HepG2 (cell line): ENCODE measurements at regions of chr6 and their contacts with region 1.

Region 1: DNA sequence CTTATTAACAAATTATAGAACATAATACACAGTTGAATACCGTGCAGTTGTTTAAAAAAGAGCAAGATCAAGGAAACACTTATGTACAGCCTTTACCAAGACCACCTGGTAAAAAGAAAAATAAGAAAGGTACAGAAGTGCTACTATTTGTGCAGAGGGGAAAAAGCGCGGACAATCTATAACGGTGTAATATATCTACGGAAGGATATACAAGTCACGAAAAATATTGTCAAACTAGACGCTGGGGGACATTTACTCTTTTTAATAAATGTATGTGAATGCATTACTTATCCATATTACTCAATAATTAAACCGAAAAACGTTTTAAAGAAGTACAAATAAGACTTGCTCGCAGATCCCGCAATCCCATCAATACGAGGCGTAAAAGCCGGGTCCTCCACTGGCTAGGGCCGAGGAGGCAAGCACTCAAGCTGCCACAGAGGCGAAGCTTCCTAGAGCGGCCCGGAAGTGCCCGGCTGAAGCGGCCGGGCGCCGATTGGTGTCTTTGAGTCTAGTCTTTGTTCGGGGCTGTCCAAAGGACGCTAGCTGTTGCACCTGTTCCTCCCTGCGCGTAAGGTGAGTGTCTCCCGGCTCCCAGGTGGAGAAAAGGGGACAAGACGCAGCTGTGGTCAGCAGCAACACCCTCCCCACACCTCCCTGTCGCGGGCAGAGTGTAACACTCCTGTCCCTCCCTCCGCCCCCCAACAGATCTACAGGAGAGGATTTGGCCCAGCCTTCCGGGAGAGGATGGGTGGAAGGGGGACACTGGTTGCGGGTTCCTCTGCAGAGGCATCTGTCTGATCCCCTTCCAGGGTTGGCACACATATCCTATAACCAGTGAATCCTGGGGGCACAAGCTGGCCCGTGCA is at the start of gene ZSCAN16:
- DNase-seq: peak; percentile 87
- ATAC-seq: peak; percentile 100
- H3K4me3 ChIP-seq: peak within 1 kb of the TSS; percentile 81 to 89 (median 86)
- H3K27ac ChIP-seq: peak within 1 kb of the TSS; percentile 60
- H3K4me1 ChIP-seq: peaks cover 24% of the 10 kb centered on the region
- H3K27me3 ChIP-seq: no peaks in the 10 kb centered on the region; a peak in 1 of 5 replicates
- CTCF ChIP-seq: peak; percentile 21; the same call in 1 of the 2 replicates
- EP300 ChIP-seq: no peak
- POLR2A ChIP-seq: peak; percentile 89
- RAD21 ChIP-seq: no peak; the same call in none of the 2 replicates
- total RNA-seq, gene ZSCAN16: 12.7 and 13.4 TPM in 2 replicates

Region 2: DNA sequence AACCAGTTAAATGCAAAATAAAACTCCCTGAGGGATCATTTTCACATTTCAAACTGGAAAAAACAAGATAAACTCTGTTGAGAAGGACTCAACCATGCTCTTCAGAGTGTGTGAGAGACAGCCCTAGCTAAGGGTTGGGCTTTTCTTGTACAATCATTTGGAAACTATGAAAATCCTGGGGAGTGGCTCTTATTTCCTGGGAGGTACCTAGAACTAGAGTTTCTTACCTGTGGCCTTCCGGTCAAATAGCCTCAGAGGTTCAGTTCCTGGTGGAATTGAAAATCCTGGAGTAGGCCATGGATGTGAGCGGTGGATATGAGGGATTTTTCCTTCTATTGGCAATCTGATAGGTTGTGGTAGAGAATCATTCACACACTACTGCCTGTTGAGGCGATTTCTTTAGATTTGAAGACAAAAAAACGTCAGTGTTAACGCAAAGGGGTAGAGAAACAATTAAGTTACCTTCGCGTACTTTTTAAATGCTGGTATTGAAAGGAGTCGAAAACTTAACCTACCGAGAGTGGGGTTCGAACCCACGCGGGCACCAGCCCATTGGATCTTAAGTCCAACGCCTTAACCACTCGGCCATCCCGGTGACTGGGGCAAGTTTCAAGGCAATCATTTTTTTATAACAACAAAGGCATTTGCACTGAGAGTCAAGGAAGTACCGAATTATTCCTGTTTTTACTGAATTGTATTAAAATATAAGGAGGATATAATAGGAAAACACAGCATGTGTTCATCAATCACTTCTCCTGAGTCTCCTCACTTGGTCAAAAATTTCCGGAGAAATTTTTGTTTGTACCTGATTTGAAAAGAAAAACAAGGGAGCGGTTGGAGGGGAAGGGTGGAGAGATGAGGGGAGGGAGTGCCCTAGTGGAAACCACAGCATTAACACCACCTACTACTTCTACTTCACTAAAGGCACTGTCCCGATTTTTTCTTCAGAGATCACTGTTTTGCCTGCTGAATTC is 403.4 kb before region 1 on chr6:
- CTCF ChIA-PET with region 1: no interaction called
- POLR2A ChIA-PET with region 1: no interaction called
- in situ Hi-C with region 1: no loop called
- intact Hi-C with region 1: no loop called
- DNase-seq: peak; percentile 21
- ATAC-seq: peak; percentile 72
- H3K4me3 ChIP-seq: peak overlapping the region in 2 of 3 experiments; percentile 8 to 24; a peak in 1 of 6 replicates
- H3K27ac ChIP-seq: no peak overlapping the region
- H3K4me1 ChIP-seq: peaks cover 30% of the 10 kb centered on the region
- H3K27me3 ChIP-seq: no peaks in the 10 kb centered on the region
- CTCF ChIP-seq: no peak
- EP300 ChIP-seq: no peak
- POLR2A ChIP-seq: no peak
- RAD21 ChIP-seq: no peak

Region 3: DNA sequence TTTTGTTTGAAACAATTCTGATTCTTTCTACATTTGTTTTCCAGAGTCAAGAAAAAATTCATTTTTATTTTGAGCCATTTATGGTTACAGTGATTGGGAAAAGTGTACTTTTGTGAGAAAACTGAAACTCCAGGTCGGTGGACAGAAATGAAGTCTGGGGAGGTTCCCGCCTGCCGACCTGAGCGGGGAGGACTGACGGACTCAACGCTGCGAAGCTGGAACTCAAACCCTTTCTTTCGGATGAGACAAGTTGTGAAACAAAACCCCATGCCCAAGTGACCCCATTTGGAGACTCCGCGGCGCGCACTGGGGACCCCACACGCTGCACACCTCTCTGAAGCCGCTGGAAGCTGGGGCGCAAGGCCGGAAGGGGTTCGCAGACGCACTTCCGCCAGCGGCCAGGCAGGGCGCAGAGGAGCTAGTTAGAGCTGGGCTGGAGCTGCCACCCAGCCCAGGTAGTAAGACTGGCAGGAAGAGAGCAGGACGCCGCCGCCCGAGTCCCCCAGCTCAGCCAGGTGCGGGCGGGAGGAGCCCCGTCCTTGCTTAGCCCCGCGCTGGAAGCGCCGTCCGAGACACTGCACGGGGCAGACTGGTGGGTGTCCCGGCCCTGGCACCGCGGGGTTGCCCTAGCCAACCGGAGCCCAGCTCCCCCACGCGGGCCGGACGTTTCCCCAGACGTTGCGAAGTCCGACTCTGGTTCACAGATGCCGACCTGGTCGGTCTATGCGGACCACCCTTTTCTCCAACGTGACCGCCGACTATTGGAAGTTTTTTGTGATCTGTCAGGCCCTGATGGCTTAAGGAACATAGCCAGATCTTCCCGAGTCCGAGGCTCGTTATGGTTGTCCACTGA is 19.7 kb before region 1 on chr6:
- CTCF ChIA-PET with region 1: no interaction called
- POLR2A ChIA-PET with region 1: interaction called, 26 read pairs
- in situ Hi-C with region 1: no loop called
- intact Hi-C with region 1: no loop called
- DNase-seq: peak; percentile 80
- ATAC-seq: peak; percentile 100
- H3K4me3 ChIP-seq: peak overlapping the region; percentile 62 to 84 (median 71)
- H3K27ac ChIP-seq: peak overlapping the region; percentile 35
- H3K4me1 ChIP-seq: peaks cover 15% of the 10 kb centered on the region
- H3K27me3 ChIP-seq: no peaks in the 10 kb centered on the region; a peak in 1 of 5 replicates
- CTCF ChIP-seq: peak; percentile 84
- EP300 ChIP-seq: 0 out of 4 replicates have a peak, but pooled peaks of 1 of the 2 experiments have one; percentile 24
- POLR2A ChIP-seq: peak; percentile 73 to 92
- RAD21 ChIP-seq: peak; percentile 72

Region 4: DNA sequence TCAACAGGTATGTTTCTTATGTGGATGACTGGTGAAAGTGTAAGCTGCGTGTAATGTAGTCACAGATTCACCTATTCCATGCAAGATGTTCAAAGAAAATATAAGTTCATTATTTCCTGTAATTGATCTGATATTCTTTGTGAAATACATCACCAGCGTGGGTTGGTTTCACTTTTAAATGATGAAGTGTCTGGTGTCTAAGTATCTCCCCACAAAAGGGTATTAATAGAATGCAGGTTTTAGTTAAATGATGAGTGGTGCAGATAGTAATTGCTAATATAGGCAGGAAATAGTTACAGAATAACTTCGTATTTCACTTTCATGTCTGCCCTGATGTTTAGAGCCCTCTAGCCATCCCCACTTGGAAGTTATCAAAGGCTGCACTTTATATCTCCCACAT is 179.2 kb after region 1 on chr6:
- CTCF ChIA-PET with region 1: no interaction called
- POLR2A ChIA-PET with region 1: no interaction called
- in situ Hi-C with region 1: no loop called
- intact Hi-C with region 1: no loop called
- DNase-seq: no peak
- ATAC-seq: no peak
- H3K4me3 ChIP-seq: no peak overlapping the region
- H3K27ac ChIP-seq: no peak overlapping the region
- H3K4me1 ChIP-seq: no peaks in the 10 kb centered on the region
- H3K27me3 ChIP-seq: no peaks in the 10 kb centered on the region
- CTCF ChIP-seq: no peak
- EP300 ChIP-seq: no peak
- POLR2A ChIP-seq: no peak
- RAD21 ChIP-seq: no peak